BJ (cell line): ENCODE measurements at regions of chr3 and their contacts with region 1.

Region 1: DNA sequence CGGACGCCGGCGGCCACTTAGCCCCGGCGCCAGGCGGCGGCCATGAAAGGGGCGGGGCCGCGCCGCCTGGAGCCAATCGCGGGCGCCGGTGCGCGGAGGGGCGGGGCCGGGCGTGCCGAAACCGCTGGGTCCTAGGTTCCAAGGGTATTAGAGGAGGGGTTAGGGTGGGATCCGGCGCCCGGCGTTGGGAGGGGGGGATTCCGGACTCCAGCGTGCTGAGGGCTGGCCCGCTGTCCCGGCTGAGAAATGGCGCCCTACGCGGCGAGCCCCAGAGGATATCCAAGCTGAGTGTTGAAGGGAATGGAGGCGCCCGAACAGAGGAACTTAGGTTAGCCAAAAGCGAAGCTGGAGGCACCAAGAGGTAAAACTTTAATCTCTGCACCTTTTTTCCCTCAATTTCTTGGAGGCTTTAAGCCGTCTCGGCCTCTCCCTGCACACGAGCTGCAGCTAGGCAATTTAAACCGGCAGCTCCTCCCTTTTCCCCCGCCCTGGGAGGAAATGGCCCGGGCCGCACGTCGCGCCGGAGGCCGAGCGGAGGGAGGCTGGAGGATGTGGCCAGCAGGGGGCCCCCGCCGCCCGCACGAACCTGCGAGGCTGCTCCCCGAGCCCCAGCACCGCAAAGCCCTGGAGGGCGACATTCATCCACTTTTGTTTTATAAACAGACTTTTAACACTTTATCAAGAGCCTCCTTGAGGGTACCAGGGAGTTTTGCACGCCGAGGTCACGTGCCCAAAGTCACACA is at the start of gene XXYLT1:
- DNase-seq: peak; percentile 30
- H3K4me3 ChIP-seq: peak within 1 kb of the TSS; percentile 91
- H3K27me3 ChIP-seq: no peaks in the 10 kb centered on the region
- CTCF ChIP-seq: peak; percentile 81
- polyA plus RNA-seq, gene XXYLT1: 24.4 and 33.5 TPM in 2 replicates

Region 2: GRCh38 chr3:194682694-194683310 is 588.5 kb before region 1 on chr3:
- CTCF ChIA-PET with region 1: interaction called, 48 read pairs
- POLR2A ChIA-PET with region 1: no interaction called
- DNase-seq: no peak
- H3K4me3 ChIP-seq: no peak overlapping the region
- H3K27me3 ChIP-seq: no peaks in the 10 kb centered on the region
- CTCF ChIP-seq: peak; percentile 87

Region 3: GRCh38 chr3:195204360-195205163 is 66.7 kb before region 1 on chr3:
- CTCF ChIA-PET with region 1: no interaction called
- POLR2A ChIA-PET with region 1: no interaction called
- DNase-seq: peak; percentile 52
- H3K4me3 ChIP-seq: no peak overlapping the region
- H3K27me3 ChIP-seq: no peaks in the 10 kb centered on the region
- CTCF ChIP-seq: no peak

Region 4: GRCh38 chr3:195286115-195286872 is 15.0 kb after region 1 on chr3:
- CTCF ChIA-PET with region 1: interaction called, 27 read pairs
- POLR2A ChIA-PET with region 1: no interaction called
- DNase-seq: no peak
- H3K4me3 ChIP-seq: no peak overlapping the region
- H3K27me3 ChIP-seq: no peaks in the 10 kb centered on the region
- CTCF ChIP-seq: no peak

Region 5: GRCh38 chr3:195522254-195523023 is 251.2 kb after region 1 on chr3:
- CTCF ChIA-PET with region 1: interaction called, 160 read pairs
- POLR2A ChIA-PET with region 1: no interaction called
- DNase-seq: no peak
- H3K4me3 ChIP-seq: no peak overlapping the region
- H3K27me3 ChIP-seq: no peaks in the 10 kb centered on the region
- CTCF ChIP-seq: peak; percentile 49